ENCODE measurements at regions of chr15 and their contacts with region 1.

Region 1: GRCh38 chr15:67839929-67840748 is at the start of gene RNU6-1:
- DNase-seq: peak; percentile 93
- H3K4me3 ChIP-seq: peak within 1 kb of the TSS; percentile 69 to 80 (median 75)
- H3K27ac ChIP-seq: peak within 1 kb of the TSS; percentile 82
- H3K4me1 ChIP-seq: peaks cover 25% of the 10 kb centered on the region
- H3K27me3 ChIP-seq: peaks cover 19 to 23% of the 10 kb centered on the region in 2 experiments
- CTCF ChIP-seq: no peak
- POLR2A ChIP-seq: peak; percentile 85
- total RNA-seq, gene RNU6-1: not detected in 2 replicates

Region 2: DNA sequence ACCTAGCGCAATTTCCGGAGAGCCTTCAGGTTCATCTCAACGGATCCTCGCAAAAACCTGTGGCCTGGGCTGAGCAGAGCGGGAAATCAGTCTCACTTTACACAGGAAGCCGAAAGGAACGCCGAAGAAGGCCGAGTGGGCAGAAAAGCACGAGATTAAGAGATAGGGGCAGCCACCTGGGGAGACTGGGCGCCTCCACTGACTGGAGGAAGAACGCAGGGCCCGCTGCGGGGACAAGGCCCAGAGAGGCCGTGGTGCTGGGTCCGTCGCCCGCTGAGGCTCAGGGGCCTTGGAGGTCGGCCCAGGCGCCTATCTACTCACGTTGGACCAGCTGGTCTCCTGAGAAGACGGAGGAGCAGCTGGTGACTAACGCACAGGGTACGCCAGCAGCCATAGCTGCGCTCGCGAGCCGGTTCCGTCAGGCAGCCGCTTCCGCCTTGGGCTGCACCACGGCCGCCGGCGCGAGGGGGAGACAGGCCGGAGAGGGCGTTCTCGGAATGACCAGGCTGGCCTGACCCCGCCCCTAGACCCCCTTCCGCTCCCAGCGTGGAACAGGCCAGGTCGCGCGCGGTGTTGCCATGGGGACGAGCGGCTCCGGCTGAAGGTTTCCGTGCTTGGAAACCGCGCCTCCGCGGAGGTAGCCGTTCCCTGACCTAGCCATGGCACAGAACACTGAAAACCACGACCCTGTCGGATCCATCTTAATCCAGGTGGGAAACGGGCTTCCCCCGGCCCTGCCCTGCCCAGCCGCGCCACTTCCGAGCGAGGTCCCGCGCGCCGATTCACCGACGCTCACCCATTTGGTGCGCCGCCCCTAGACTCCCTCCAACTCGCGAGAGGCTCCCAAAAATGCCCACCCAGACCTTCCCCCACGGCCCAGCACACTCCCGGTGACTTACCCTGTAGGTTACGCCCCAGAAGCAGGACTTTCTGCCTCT is 585.6 kb before region 1 on chr15 and contains the starts of genes AAGAB and IQCH:
- CTCF ChIA-PET with region 1: no interaction called
- POLR2A ChIA-PET with region 1: no interaction called
- dilution Hi-C with region 1: no loop called
- intact Hi-C with region 1: loop called (anchors 2 kb)
- DNase-seq: peak; percentile 98
- H3K4me3 ChIP-seq: peak within 1 kb of the TSS; percentile 90 to 97 (median 95)
- H3K27ac ChIP-seq: peak within 1 kb of the TSS; percentile 93
- H3K4me1 ChIP-seq: peaks cover 7% of the 10 kb centered on the region
- H3K27me3 ChIP-seq: no peaks in the 10 kb centered on the region
- CTCF ChIP-seq: no peak
- POLR2A ChIP-seq: peak; percentile 84
- total RNA-seq, gene AAGAB: 38.0 and 42.6 TPM in 2 replicates
- total RNA-seq, gene IQCH: 0.51 and 2.6 TPM in 2 replicates

Region 3: GRCh38 chr15:67383899-67384298 is 456.2 kb before region 1 on chr15:
- CTCF ChIA-PET with region 1: interaction called, 11 read pairs
- POLR2A ChIA-PET with region 1: no interaction called
- dilution Hi-C with region 1: no loop called
- intact Hi-C with region 1: loop called (anchors 5 kb)
- DNase-seq: no peak
- H3K4me3 ChIP-seq: no peak overlapping the region
- H3K27ac ChIP-seq: no peak overlapping the region
- H3K4me1 ChIP-seq: no peaks in the 10 kb centered on the region
- H3K27me3 ChIP-seq: peaks cover 0 to 13% of the 10 kb centered on the region in 2 experiments
- CTCF ChIP-seq: no peak
- POLR2A ChIP-seq: no peak

Region 4: DNA sequence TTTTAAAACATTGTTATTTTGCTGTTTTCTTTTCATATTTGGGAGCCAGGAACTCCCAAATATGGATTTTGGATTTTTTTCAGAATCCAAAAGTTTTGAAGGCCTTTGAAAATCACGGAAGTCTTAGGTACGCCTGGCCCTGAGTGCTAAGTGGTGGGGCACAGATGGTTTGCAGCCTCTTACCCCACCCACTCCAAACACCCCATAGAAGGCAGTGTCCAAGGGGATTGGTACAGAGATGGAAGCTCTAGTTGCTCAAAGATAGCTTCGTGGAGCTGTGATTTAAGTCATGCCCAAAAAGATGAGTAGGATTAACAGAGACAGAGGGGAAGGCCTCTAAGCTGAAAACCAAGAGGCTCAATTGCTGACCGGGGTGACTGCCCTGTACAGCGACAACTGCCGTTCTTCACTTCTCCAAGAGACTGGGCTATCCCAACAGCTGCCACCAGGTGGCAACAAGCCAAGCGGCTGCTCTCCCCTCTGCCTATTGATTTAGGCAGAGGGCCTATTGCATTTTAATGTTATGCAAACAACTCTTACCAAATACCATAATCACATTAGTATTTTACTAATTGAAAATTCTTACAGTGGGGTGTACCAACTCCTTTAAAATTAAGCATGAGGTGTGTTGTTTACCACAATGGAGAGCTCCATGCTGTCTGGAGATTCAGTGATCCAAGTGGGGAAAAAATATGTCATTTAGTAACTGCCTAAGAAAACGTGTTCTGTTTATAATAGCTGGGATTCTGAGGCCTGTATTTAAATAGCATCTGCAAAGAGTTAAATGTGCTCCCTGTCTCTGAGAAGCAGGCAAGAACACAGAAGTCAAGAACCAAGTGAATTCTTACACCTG is 383.2 kb before region 1 on chr15:
- CTCF ChIA-PET with region 1: interaction called, 111 read pairs
- POLR2A ChIA-PET with region 1: no interaction called
- dilution Hi-C with region 1: no loop called
- intact Hi-C with region 1: loop called (anchors 1 kb)
- DNase-seq: peak; percentile 70
- H3K4me3 ChIP-seq: no peak overlapping the region
- H3K27ac ChIP-seq: no peak overlapping the region
- H3K4me1 ChIP-seq: no peaks in the 10 kb centered on the region
- H3K27me3 ChIP-seq: peaks cover 7 to 13% of the 10 kb centered on the region in 2 experiments
- CTCF ChIP-seq: peak; percentile 87 to 95
- POLR2A ChIP-seq: no peak

Region 5: GRCh38 chr15:67501177-67501835 is 338.8 kb before region 1 on chr15:
- CTCF ChIA-PET with region 1: interaction called, 23 read pairs
- POLR2A ChIA-PET with region 1: no interaction called
- dilution Hi-C with region 1: no loop called
- intact Hi-C with region 1: loop called (anchors 1 kb)
- DNase-seq: peak; percentile 48
- H3K4me3 ChIP-seq: peak overlapping the region in 1 of 3 experiments; percentile 47
- H3K27ac ChIP-seq: no peak overlapping the region
- H3K4me1 ChIP-seq: peaks cover 7% of the 10 kb centered on the region
- H3K27me3 ChIP-seq: no peaks in the 10 kb centered on the region
- CTCF ChIP-seq: peak in 1 of 2 donors; percentile 3
- POLR2A ChIP-seq: no peak

Region 6: DNA sequence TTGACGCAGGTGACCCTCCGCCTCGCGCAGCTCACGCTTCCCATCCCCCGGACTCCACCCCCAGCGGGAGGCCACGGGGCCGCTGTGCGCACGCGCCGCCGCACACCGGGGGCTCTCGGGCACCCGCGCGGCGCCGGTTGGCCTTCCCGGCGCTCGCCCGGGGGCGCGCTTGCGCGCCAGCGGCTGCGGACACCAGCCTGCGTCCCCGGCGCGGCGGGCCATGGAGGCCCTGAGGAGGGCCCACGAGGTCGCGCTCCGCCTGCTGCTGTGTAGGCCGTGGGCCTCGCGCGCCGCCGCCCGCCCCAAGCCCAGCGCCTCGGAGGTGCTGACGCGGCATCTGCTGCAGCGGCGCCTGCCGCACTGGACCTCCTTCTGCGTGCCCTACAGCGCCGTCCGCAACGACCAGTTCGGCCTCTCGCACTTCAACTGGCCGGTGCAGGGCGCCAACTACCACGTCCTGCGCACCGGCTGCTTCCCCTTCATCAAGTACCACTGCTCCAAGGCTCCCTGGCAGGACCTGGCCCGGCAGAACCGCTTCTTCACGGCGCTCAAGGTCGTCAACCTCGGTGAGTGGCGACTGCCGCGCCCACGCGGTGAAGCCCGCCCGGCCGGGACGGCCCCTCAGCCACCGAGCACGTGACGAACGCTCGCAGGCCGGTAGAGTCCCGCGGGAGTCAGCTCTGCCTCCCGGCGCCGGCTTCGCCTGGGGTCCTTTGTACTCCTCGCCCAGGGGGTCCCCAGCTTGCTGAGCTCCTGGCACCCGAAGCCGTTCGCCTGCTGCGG is 318.9 kb before region 1 on chr15 and contains the start of gene C15orf61:
- CTCF ChIA-PET with region 1: interaction called, 8 read pairs
- POLR2A ChIA-PET with region 1: no interaction called
- dilution Hi-C with region 1: no loop called
- intact Hi-C with region 1: loop called (anchors 1 kb)
- DNase-seq: peak; percentile 84
- H3K4me3 ChIP-seq: peak within 1 kb of the TSS; percentile 77 to 95 (median 81)
- H3K27ac ChIP-seq: peak within 1 kb of the TSS; percentile 63
- H3K4me1 ChIP-seq: peaks cover 17% of the 10 kb centered on the region
- H3K27me3 ChIP-seq: no peaks in the 10 kb centered on the region
- CTCF ChIP-seq: no peak
- POLR2A ChIP-seq: peak; percentile 34
- total RNA-seq, gene C15orf61: 3.7 and 4.1 TPM in 2 replicates

Region 7: GRCh38 chr15:67542420-67543347 is 297.5 kb before region 1 on chr15 and contains the start of gene MAP2K5:
- CTCF ChIA-PET with region 1: no interaction called
- POLR2A ChIA-PET with region 1: no interaction called
- dilution Hi-C with region 1: no loop called
- intact Hi-C with region 1: loop called (anchors 1 kb)
- DNase-seq: peak; percentile 77
- H3K4me3 ChIP-seq: peak within 1 kb of the TSS; percentile 67 to 99 (median 96)
- H3K27ac ChIP-seq: peak within 1 kb of the TSS; percentile 65
- H3K4me1 ChIP-seq: peaks cover 8% of the 10 kb centered on the region
- H3K27me3 ChIP-seq: no peaks in the 10 kb centered on the region
- CTCF ChIP-seq: no peak
- POLR2A ChIP-seq: peak; percentile 84
- total RNA-seq, gene MAP2K5: 24.2 and 24.7 TPM in 2 replicates

Measured in endothelial cell of umbilical vein (primary cell).